CD4-positive, alpha-beta memory T cell (primary cell): ENCODE measurements at regions of chr12 and their contacts with region 1.

Region 1: GRCh38 chr12:6825398-6826124 is 2.6 kb upstream of the P3H3 start:
- DNase-seq: peak; percentile 73 to 82 (median 78)
- H3K4me3 ChIP-seq: no peak overlapping the region
- H3K4me3 Mint-ChIP-seq: peak overlapping the region in 1 of 8 donors; percentile 57
- H3K27ac ChIP-seq: no peak overlapping the region
- H3K27ac Mint-ChIP-seq: peak overlapping the region in 4 of 7 donors; percentile 24 to 71 (median 34)
- H3K4me1 ChIP-seq: peaks cover 36% of the 10 kb centered on the region
- H3K4me1 Mint-ChIP-seq: peaks cover 17 to 60% (median 28%) of the 10 kb centered on the region in 4 donors
- H3K27me3 ChIP-seq: peaks cover 10% of the 10 kb centered on the region
- H3K27me3 Mint-ChIP-seq: peaks cover 6 to 24% of the 10 kb centered on the region in 2 donors

Region 2: GRCh38 chr12:6563448-6564050 is 262.0 kb before region 1 on chr12:
- CTCF ChIA-PET with region 1: interaction called, 6 read pairs
- POLR2A ChIA-PET with region 1: no interaction called
- intact Hi-C with region 1: loop called (anchors 10 kb)
- DNase-seq: peak; percentile 55 to 62 (median 58)
- H3K4me3 ChIP-seq: no peak overlapping the region
- H3K4me3 Mint-ChIP-seq: peak overlapping the region in 1 of 8 donors; percentile 57
- H3K27ac ChIP-seq: no peak overlapping the region
- H3K27ac Mint-ChIP-seq: peak overlapping the region in 6 of 7 donors; percentile 57 to 90 (median 68)
- H3K4me1 ChIP-seq: peaks cover 33% of the 10 kb centered on the region
- H3K4me1 Mint-ChIP-seq: peaks cover 19 to 48% (median 36%) of the 10 kb centered on the region in 4 donors
- H3K27me3 ChIP-seq: no peaks in the 10 kb centered on the region
- H3K27me3 Mint-ChIP-seq: no peaks in the 10 kb centered on the region

Region 3: GRCh38 chr12:6662906-6663742 is 162.4 kb before region 1 on chr12 and contains the start of gene ING4:
- CTCF ChIA-PET with region 1: no interaction called
- POLR2A ChIA-PET with region 1: no interaction called
- intact Hi-C with region 1: loop called (anchors 2 kb)
- DNase-seq: peak; percentile 95 to 99 (median 98)
- H3K4me3 ChIP-seq: peak within 1 kb of the TSS; percentile 97
- H3K4me3 Mint-ChIP-seq: peak within 1 kb of the TSS; percentile 91 to 97 (median 94)
- H3K27ac ChIP-seq: peak within 1 kb of the TSS; percentile 79
- H3K27ac Mint-ChIP-seq: peak within 1 kb of the TSS; percentile 88 to 98 (median 98)
- H3K4me1 ChIP-seq: peaks cover 21% of the 10 kb centered on the region
- H3K4me1 Mint-ChIP-seq: peaks cover 20 to 42% (median 30%) of the 10 kb centered on the region in 4 donors
- H3K27me3 ChIP-seq: no peaks in the 10 kb centered on the region
- H3K27me3 Mint-ChIP-seq: no peaks in the 10 kb centered on the region
- total RNA-seq, gene ING4: 82.3 to 83.5 TPM

Region 4: DNA sequence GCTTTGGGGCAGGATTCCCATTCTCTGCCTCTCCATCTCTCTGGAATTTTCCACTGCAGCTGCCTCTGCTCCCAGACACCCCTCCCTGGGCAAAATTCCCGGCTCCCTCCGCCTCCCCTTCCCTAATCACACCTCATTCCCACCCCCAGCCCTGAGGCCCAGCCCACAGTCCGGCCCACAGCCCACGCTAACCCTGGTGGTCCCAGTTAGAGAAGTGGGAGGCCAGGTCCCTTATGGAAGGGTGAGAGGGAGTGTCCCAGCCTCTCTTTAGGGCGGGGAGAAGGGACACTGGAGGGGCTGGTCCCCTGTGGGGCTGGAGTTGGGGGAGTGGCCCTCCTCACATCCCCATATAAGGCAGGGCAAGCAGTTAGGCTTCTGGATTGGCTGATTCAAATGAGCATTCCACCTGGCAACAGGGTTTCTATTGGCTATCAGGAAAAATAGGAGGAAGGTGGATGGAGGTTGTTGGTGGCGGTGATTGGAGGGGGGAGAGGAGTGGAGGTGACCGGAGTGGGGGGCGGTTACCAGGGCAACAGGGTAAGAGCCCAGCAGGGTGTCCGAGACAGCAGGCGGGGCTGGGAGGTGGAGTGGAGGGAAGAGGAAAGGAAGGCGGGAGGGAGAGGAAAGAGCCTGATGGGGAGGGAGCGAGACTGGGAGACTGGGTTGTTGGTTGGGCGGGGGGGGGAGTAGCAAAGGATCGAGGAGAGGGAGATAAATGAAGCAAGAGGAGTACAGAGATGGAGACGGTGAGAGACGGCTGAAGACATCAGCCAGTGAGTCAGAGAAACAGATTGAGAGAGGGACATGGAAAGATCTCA is 61.3 kb before region 1 on chr12:
- CTCF ChIA-PET with region 1: interaction called, 303 read pairs
- POLR2A ChIA-PET with region 1: interaction called, 6 read pairs
- intact Hi-C with region 1: no loop called
- DNase-seq: peak; percentile 47 to 79 (median 56)
- H3K4me3 ChIP-seq: no peak overlapping the region
- H3K4me3 Mint-ChIP-seq: peak overlapping the region; percentile 3 to 72 (median 62)
- H3K27ac ChIP-seq: no peak overlapping the region
- H3K27ac Mint-ChIP-seq: peak overlapping the region in 2 of 7 donors; percentile 31 to 46
- H3K4me1 ChIP-seq: peaks cover 27% of the 10 kb centered on the region
- H3K4me1 Mint-ChIP-seq: peaks cover 15 to 40% (median 28%) of the 10 kb centered on the region in 4 donors
- H3K27me3 ChIP-seq: peaks cover 15% of the 10 kb centered on the region
- H3K27me3 Mint-ChIP-seq: peaks cover 16 to 25% of the 10 kb centered on the region in 2 donors

Region 5: GRCh38 chr12:6792522-6793201 is 32.9 kb before region 1 on chr12:
- CTCF ChIA-PET with region 1: interaction called, 303 read pairs
- POLR2A ChIA-PET with region 1: interaction called, 19 read pairs
- intact Hi-C with region 1: loop called (anchors 2 kb)
- DNase-seq: peak; percentile 59 to 73 (median 66)
- H3K4me3 ChIP-seq: peak overlapping the region; percentile 79
- H3K4me3 Mint-ChIP-seq: peak overlapping the region; percentile 95 to 99 (median 98)
- H3K27ac ChIP-seq: peak overlapping the region; percentile 83
- H3K27ac Mint-ChIP-seq: peak overlapping the region; percentile 90 to 99 (median 98)
- H3K4me1 ChIP-seq: peaks cover 55% of the 10 kb centered on the region
- H3K4me1 Mint-ChIP-seq: peaks cover 50 to 92% (median 66%) of the 10 kb centered on the region in 4 donors
- H3K27me3 ChIP-seq: no peaks in the 10 kb centered on the region
- H3K27me3 Mint-ChIP-seq: no peaks in the 10 kb centered on the region

Region 6: DNA sequence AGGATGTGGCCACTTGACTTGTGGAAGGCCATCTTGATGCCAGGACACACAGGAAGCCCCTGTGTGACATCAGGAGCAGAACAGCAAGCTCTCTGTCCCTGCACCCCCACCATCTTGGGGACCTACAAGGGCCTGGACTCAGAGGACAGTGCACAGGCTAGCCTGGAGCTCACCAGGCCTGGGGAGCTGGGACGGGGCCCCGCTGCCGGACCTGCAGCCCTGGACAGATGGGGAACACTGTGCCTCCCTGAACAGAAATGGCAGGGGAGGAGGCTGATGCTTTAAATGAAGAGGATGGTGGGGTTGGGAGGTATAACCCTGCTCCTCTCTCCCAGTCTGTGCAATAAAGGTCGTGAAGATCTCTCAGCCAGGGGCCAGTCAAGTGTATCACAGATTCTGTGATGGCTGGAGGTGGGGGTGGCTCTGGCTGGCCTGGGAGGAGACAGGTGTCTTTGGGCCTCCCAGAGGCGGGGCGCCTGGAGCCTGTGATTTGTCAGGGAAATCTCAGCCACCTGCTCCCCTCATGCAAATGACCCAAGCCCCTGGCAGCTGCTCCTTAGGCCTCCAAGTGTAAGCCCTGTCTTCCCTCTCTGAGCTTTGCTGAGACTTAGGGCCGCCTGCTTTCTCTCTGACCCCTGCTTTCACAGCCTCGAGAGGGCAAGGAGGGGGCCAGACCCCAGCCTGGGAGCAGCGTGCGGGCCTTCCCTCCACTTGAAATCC is 14.1 kb after region 1 on chr12:
- CTCF ChIA-PET with region 1: interaction called, 56 read pairs
- POLR2A ChIA-PET with region 1: interaction called, 10 read pairs
- intact Hi-C with region 1: loop called (anchors 1 kb)
- DNase-seq: peak in 1 of 5 donors; percentile 9
- H3K4me3 ChIP-seq: no peak overlapping the region
- H3K4me3 Mint-ChIP-seq: no peak overlapping the region
- H3K27ac ChIP-seq: no peak overlapping the region
- H3K27ac Mint-ChIP-seq: no peak overlapping the region
- H3K4me1 ChIP-seq: peaks cover 7% of the 10 kb centered on the region
- H3K4me1 Mint-ChIP-seq: peaks cover 0 to 5% (median 2%) of the 10 kb centered on the region in 4 donors
- H3K27me3 ChIP-seq: no peaks in the 10 kb centered on the region
- H3K27me3 Mint-ChIP-seq: no peaks in the 10 kb centered on the region